ENCODE measurements at regions of chr1 and their contacts with region 1.

Region 1: DNA sequence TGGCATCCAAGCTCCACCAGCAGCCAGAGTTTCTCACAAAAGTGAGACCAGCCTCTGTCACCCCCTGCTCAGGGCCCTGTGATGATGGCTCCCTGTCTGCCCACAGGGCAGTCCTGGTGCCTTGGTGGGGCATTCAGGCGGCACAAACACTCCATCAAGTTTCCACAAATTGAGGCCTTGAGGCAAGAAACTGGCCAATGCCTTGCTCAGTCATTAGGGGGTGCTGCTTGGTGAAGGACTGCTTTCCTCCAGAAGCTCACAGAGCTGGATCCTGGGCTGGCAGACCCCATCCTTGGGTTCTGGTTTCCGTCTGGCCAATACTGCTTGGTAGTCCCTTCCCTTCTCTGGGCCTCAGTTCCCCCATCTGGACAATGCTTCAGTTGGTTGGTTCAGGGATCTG is 12.5 kb upstream of the AHDC1 start:
- DNase-seq: no peak
- ATAC-seq: peak; percentile 6; the same call in 1 of the 2 replicates
- H3K4me3 Mint-ChIP-seq: peak overlapping the region; percentile 48
- H3K27ac Mint-ChIP-seq: no peak overlapping the region
- H3K4me1 Mint-ChIP-seq: peaks cover 15% of the 10 kb centered on the region
- H3K27me3 Mint-ChIP-seq: peaks cover 15% of the 10 kb centered on the region
- CTCF ChIP-seq: no peak

Region 2: DNA sequence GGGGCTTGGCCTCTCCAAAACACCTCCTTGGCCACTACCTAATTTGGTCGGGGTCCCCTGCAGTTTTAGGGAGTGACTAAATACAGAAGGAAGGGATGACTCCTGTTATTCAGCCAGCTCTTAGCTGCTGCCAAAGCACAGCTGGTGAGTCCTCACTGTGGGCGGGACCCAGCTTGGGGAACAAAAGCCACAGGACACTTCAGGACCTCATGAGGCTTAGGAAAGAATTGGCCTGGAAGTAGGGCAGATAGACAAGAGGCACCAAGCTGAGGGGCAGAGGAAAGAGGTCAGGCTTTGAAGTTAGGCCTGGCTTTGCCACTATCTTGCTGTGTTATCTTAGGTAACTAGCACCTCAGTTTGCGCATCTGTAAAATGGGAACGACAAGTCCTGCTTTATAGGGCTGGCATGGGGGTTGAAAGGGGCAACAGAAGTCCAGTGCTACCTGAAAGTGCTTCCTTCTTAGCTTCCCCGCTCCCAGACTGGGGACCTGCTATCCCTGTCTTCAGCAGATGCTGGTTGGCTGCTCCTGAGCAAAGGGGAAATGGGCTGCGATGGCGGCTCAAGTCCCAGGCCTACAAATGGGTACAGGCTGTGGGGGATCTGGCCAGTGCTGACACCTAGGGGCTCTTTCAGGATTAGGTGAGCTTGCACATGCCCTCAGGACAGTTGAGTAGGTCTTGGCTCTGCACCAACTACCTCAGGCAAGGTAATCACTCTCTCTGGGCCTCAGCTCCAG is 39.9 kb after region 1 on chr1:
- CTCF ChIA-PET with region 1: interaction called, 367 read pairs
- POLR2A ChIA-PET with region 1: interaction called, 11 read pairs
- DNase-seq: peak; percentile 70
- ATAC-seq: peak; percentile 57
- H3K4me3 Mint-ChIP-seq: no peak overlapping the region
- H3K27ac Mint-ChIP-seq: peak overlapping the region; percentile 79
- H3K4me1 Mint-ChIP-seq: peaks cover 37% of the 10 kb centered on the region
- H3K27me3 Mint-ChIP-seq: peaks cover 3% of the 10 kb centered on the region; the same call in 1 of the 2 replicates
- CTCF ChIP-seq: no peak

Measured in WTC11 (cell line).